B cell (primary cell): ENCODE measurements at regions of chr17 and their contacts with region 1.

Region 1: DNA sequence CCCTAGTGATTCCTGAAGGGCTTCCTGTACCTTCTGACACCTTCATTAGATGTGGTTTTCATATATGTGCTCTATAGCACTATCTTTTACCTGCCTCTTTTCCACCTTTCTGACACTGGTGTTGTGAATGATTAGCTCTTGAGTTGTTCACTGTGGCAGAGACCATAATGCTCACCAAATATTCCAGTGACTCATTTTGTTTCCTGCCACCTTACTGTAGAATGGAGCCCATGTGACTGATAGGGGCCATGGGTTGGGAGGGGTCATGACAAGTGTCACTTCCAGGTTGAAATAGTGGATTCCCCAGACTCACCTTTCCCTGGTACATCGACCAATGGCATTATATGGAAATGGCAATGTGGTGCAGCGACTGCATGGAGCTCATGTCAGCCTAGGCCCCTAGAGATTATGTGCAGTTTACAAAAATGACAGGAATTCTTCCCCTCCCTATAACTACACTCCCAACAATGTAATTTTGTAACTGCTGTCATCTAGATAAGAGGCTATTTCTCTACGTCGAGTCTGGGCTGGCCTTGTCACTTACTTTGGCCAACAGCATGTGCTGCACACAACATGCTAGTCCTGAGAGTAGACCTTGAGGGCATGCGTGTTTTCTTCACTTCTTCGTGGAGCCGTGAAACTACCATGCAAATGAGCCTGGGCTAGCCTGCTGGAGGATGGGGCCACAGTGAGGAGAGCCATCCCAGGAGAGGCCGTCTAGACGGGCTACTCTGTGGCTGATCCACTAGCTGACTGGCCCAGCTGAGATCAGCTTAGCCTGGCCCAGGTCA is 409.6 kb downstream of the CA10 start:
- DNase-seq: no peak
- ATAC-seq: no peak
- H3K4me3 ChIP-seq: no peak overlapping the region
- H3K4me3 Mint-ChIP-seq: no peak overlapping the region
- H3K27ac ChIP-seq: no peak overlapping the region
- H3K27ac Mint-ChIP-seq: no peak overlapping the region
- H3K4me1 ChIP-seq: no peaks in the 10 kb centered on the region
- H3K4me1 Mint-ChIP-seq: no peaks in the 10 kb centered on the region
- H3K27me3 ChIP-seq: no peaks in the 10 kb centered on the region
- H3K27me3 Mint-ChIP-seq: no peaks in the 10 kb centered on the region
- CTCF ChIP-seq: no peak

Region 2: GRCh38 chr17:51764387-51764972 is 15.5 kb after region 1 on chr17:
- CTCF ChIA-PET with region 1: interaction called, 28 read pairs
- POLR2A ChIA-PET with region 1: no interaction called
- intact Hi-C with region 1: no loop called
- DNase-seq: peak; percentile 30
- ATAC-seq: peak; percentile 28
- H3K4me3 ChIP-seq: no peak overlapping the region
- H3K4me3 Mint-ChIP-seq: no peak overlapping the region
- H3K27ac ChIP-seq: no peak overlapping the region
- H3K27ac Mint-ChIP-seq: no peak overlapping the region
- H3K4me1 ChIP-seq: no peaks in the 10 kb centered on the region
- H3K4me1 Mint-ChIP-seq: no peaks in the 10 kb centered on the region
- H3K27me3 ChIP-seq: peaks cover 0 to 5% (median 0%) of the 10 kb centered on the region in 4 experiments
- H3K27me3 Mint-ChIP-seq: peaks cover 10% of the 10 kb centered on the region
- CTCF ChIP-seq: peak; percentile 76